OCI-LY7 (cell line): ENCODE measurements at regions of chr14 and their contacts with region 1.

Region 1: DNA sequence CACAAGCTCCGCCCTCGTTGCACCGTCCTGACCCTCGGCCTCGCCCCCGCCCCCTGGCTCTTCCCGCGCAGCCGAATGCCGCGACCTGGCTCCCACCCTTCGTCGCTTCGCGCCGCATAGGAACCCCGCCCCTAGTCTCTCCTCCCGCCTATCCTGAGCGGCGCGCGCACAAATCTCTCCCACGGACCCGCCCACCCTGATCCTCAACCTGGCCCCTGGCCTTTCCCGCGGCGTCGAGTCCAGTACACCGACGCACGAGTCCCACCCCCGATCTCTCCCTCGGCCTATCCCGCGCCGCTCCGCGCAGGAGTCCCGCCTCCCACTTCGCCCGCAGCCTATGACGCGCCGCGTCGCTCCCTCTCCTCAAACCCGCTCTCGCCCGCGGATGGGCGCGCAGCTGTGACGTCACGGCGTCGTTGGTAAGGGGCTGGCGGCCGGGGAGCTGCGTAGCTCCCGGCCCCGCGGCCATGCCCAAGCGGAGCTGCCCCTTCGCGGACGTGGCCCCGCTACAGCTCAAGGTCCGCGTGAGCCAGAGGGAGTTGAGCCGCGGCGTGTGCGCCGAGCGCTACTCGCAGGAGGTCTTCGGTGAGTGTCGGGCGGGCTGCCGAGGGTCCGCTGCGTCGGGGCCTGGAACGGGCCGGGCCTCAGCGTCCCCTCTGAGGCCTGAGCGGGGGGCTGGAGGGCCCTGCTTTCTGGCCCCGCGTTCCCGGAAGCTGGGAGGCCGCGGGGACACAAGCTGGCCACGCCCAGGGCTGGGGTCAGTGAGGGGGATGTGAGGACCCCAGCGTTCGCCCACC is at the start of gene SIVA1:
- DNase-seq: peak; percentile 99
- H3K4me3 ChIP-seq: peak within 1 kb of the TSS; percentile 91
- H3K27ac ChIP-seq: peak within 1 kb of the TSS; percentile 82
- H3K4me1 ChIP-seq: peaks cover 57% of the 10 kb centered on the region
- CTCF ChIP-seq: no peak
- total RNA-seq, gene SIVA1: 215 and 244 TPM in 2 replicates

Region 2: GRCh38 chr14:104794641-104795467 is 41.9 kb after region 1 on chr14:
- CTCF ChIA-PET with region 1: no interaction called
- POLR2A ChIA-PET with region 1: no interaction called
- intact Hi-C with region 1: loop called (anchors 1 kb)
- DNase-seq: peak; percentile 58
- H3K4me3 ChIP-seq: peak overlapping the region; percentile 93
- H3K27ac ChIP-seq: no peak overlapping the region
- H3K4me1 ChIP-seq: peaks cover 21% of the 10 kb centered on the region
- CTCF ChIP-seq: no peak

Region 3: DNA sequence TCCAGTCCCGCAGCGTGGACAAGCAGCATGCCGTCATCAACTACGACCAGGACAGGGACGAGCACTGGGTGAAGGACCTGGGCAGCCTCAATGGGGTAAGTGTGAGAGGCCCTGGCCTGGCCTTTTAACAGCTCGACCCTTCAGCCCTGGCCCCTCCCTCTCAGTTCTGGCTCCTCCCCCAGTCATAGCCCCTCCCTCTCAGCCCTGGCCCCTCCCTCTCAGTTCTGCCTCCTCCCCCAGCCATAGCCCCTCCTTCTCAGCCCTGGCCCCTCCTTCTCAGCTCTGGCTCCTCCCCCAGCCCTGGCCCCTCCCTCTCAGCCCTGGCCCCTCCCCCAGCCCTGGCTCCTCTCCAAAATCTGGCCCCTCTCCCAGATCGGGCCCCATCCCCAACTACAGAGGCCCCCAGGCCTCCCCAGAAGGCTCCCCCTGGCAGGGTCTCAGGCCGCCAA is 123.3 kb after region 1 on chr14:
- CTCF ChIA-PET with region 1: no interaction called
- POLR2A ChIA-PET with region 1: no interaction called
- intact Hi-C with region 1: loop called (anchors 5 kb)
- DNase-seq: peak; percentile 43
- H3K4me3 ChIP-seq: no peak overlapping the region
- H3K27ac ChIP-seq: no peak overlapping the region
- H3K4me1 ChIP-seq: peaks cover 4% of the 10 kb centered on the region
- CTCF ChIP-seq: no peak

Region 4: GRCh38 chr14:105020815-105021655 is 268.1 kb after region 1 on chr14 and contains the start of gene CDCA4:
- CTCF ChIA-PET with region 1: no interaction called
- POLR2A ChIA-PET with region 1: no interaction called
- intact Hi-C with region 1: loop called (anchors 10 kb)
- DNase-seq: peak; percentile 99
- H3K4me3 ChIP-seq: peak within 1 kb of the TSS; percentile 85
- H3K27ac ChIP-seq: peak within 1 kb of the TSS; percentile 89
- H3K4me1 ChIP-seq: peaks cover 50% of the 10 kb centered on the region
- CTCF ChIP-seq: 0 out of 2 replicates have a peak, but pooled peaks have one; percentile 8
- total RNA-seq, gene CDCA4: 109 and 110 TPM in 2 replicates